Dorsolateral prefrontal cortex (tissue), 120 donors: ENCODE measurements at regions of chr1 and their contacts with region 1.

Region 1: DNA sequence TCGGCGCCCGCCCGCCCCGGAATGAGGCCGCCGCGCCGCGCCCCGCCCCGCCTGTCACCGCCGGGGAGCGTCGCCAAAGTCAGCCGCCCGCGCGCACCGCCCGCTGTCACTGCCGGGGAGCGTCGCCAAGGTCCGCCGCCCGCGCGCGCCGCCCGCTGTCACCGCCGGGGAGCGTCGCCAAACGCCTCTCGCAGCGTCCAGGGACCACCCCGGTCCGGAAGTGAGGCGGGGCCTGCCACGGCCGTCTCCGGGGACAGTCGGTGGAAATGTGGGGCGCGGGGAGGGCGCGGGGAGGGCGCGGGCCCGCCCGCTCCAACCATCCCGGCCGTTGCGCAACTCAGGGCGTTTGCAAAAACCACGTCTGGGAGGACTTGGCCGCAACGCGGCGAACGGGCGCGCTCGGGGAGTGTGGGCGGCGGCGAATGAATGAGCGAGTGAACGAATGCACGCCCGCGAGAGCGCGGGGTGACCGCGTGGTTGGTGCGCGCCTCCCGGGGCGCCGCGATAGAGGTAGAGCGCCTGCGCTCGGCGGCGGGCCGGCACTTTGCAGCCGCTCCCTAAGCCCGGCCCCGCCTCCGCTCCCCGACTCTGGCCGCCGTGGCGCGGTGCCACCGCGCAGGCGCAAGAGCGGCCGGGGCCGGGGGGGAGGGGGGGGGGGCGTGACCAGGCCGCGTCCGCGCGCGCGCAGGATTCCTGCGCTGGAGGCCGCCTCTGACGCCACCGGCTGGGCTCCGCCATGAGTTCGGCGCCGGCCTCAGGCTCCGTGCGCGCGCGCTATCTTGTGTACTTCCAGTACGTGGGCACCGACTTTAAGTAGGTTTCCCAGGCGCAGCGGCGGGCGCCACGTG is at the starts of genes ACAP3 and PUSL1:
- DNase-seq: peak; percentile 69 to 90 (median 86)
- H3K4me3 ChIP-seq: peak within 1 kb of the TSS; percentile 65 to 97 (median 89)
- H3K27ac ChIP-seq: peak within 1 kb of the TSS; percentile 86 to 100 (median 99)
- H3K27me3 ChIP-seq: no peaks in the 10 kb centered on the region
- CTCF ChIP-seq: peak in 34 of 56 donors; percentile 9 to 55 (median 34)
- total RNA-seq, gene ACAP3: 92.3 to 273 (median 164) TPM
- total RNA-seq, gene PUSL1: 9.1 to 22.8 (median 14.0) TPM

Region 2: DNA sequence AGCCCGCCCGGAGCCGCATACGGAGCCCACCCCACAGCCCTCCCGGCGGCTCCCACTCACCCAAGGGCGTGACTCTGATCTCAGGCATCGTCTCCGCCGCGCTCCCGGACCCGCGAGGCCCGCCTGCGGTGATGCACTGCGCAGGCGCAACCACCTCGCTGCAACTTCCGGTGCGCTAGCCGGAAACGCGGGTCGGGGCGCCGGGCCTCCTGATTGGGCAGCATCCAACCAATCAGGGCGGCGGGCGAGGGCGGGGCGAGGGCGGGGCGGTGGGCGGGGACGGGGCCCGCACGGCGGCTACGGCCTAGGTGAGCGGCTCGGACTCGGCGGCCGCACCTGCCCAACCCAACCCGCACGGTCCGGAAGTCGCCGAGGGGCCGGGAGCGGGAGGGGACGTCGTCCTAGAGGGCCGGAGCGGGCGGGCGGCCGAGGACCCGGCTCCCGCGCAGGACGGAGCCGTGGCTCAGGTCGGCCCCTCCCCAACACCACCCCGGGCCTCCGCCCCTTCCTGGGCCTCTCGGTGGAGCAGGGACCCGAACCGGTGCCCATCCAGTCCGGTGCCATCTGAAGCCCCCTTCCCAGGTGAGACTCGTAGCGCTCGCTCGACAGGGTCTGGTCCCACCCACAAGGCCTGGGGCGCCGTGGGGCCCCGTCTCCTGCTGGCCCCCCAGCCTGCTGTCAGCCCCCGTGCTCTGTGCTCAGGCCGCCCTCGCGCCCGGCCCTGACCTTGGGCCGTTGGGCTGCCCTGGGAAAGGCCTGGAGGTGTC is 16.6 kb after region 1 on chr1 and contains the starts of genes CPTP and INTS11:
- intact Hi-C with region 1: loop called in 1 of 2 experiments (anchors 2 kb)
- DNase-seq: peak; percentile 81 to 95 (median 92)
- H3K4me3 ChIP-seq: peak within 1 kb of the TSS; percentile 70 to 100 (median 97)
- H3K27ac ChIP-seq: peak within 1 kb of the TSS in 55 of 59 donors; percentile 25 to 92 (median 81)
- H3K27me3 ChIP-seq: no peaks in the 10 kb centered on the region
- CTCF ChIP-seq: peak in 12 of 56 donors; percentile 8 to 34 (median 20)
- total RNA-seq, gene CPTP: 16.2 to 34.2 (median 22.5) TPM
- total RNA-seq, gene INTS11: 87.2 to 200 (median 130) TPM

Region 3: DNA sequence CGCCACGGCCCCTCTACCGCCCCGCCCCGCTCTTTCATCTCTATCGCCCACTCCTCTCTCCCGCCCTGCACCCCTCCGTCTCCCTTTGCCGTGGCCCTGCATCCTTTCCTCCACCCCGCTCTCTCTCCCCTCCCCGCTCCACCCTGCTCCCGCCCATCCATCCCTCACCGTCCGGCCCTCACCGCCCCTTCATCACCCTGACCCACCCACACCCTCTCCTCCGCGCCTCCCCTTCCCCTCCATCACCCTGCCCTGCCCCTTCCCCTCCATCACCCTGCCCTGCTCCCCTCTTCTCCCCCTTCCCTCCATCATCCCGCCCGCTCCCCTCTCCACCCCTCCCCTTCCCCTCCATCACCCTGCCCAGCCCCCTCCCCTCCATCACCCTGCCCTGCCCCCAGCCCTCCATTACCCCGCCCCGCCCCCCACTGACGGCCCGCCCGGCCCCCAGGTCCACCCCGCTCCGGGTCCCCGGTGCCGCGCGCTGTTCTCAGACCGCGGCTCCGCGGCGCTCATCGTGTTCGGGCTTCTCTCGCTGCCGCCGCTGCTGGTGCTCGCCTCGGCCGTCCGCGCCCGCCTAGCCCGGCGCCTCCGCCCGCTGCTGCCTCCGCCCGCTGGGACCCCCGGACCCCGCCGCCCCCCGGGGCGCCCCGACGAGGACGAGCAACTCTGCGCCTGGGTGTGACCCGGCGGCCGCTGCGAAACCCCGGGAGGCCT is 119.1 kb after region 1 on chr1:
- intact Hi-C with region 1: loop called in 1 of 2 experiments (anchors 5 kb)
- DNase-seq: peak in 6 of 10 donors; percentile 30 to 81 (median 72)
- H3K4me3 ChIP-seq: peak overlapping the region in 58 of 59 donors; percentile 26 to 74 (median 58)
- H3K27ac ChIP-seq: peak overlapping the region in 58 of 59 donors; percentile 81 to 100 (median 98)
- H3K27me3 ChIP-seq: no peaks in the 10 kb centered on the region
- CTCF ChIP-seq: no peak

Region 4: GRCh38 chr1:1574721-1575537 is 266.8 kb after region 1 on chr1 and contains the start of gene SSU72:
- intact Hi-C with region 1: no loop called
- DNase-seq: peak; percentile 85 to 92 (median 90)
- H3K4me3 ChIP-seq: peak within 1 kb of the TSS; percentile 74 to 100 (median 98)
- H3K27ac ChIP-seq: peak within 1 kb of the TSS; percentile 70 to 99 (median 94)
- H3K27me3 ChIP-seq: no peaks in the 10 kb centered on the region
- CTCF ChIP-seq: peak in 6 of 56 donors; percentile 16 to 27 (median 18)
- total RNA-seq, gene SSU72: 79.2 to 139 (median 114) TPM